Activated CD4-positive, alpha-beta memory T cell treated with anti-CD3 and anti-CD28 coated beads for 36 hours (primary cell): ENCODE measurements at regions of chr5 and their contacts with region 1.

Region 1: GRCh38 chr5:80125962-80126480 is 90.9 kb downstream of the THBS4 start:
- DNase-seq: peak; percentile 28
- H3K4me3 Mint-ChIP-seq: peak overlapping the region; percentile 51
- H3K27ac Mint-ChIP-seq: peak overlapping the region; percentile 70
- H3K4me1 Mint-ChIP-seq: peaks cover 52% of the 10 kb centered on the region
- H3K27me3 Mint-ChIP-seq: no peaks in the 10 kb centered on the region

Region 2: DNA sequence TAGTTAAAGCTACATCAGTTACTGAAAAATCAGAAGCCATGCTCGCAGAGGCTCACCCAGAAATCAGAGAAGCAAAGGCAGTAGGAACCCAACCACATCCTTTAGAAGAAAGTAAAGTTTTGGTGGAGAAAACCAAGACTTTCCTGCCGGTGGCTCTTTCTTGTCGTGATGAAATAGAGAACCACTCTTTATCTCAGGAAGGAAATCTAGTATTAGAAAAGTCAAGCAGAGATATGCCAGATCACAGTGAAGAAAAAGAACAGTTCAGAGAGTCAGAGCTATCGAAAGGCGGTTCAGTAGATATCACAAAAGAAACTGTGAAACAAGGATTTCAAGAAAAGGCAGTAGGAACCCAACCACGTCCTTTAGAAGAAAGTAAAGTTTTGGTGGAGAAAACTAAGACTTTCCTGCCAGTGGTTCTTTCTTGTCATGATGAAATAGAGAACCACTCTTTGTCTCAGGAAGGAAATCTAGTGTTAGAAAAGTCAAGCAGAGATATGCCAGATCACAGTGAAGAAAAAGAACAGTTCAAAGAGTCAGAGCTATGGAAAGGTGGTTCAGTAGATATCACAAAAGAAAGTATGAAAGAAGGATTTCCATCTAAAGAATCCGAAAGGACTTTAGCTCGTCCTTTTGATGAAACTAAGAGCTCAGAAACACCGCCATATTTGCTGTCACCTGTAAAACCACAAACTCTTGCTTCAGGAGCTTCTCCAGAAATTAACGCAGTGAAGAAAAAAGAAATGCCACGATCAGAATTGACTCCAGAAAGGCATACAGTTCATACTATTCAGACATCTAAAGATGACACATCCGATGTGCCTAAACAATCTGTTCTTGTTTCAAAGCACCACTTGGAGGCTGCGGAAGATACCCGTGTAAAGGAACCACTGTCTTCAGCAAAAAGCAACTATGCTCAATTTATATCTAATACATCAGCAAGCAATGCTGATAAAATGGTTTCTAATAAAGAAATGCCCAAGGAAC is 389.2 kb before region 1 on chr5:
- CTCF ChIA-PET with region 1: no interaction called
- POLR2A ChIA-PET with region 1: no interaction called
- intact Hi-C with region 1: loop called (anchors 1 kb)
- DNase-seq: peak; percentile 21
- H3K4me3 Mint-ChIP-seq: peak overlapping the region; percentile 57
- H3K27ac Mint-ChIP-seq: peak overlapping the region; percentile 62
- H3K4me1 Mint-ChIP-seq: peaks cover 55% of the 10 kb centered on the region
- H3K27me3 Mint-ChIP-seq: peaks cover 34% of the 10 kb centered on the region

Region 3: DNA sequence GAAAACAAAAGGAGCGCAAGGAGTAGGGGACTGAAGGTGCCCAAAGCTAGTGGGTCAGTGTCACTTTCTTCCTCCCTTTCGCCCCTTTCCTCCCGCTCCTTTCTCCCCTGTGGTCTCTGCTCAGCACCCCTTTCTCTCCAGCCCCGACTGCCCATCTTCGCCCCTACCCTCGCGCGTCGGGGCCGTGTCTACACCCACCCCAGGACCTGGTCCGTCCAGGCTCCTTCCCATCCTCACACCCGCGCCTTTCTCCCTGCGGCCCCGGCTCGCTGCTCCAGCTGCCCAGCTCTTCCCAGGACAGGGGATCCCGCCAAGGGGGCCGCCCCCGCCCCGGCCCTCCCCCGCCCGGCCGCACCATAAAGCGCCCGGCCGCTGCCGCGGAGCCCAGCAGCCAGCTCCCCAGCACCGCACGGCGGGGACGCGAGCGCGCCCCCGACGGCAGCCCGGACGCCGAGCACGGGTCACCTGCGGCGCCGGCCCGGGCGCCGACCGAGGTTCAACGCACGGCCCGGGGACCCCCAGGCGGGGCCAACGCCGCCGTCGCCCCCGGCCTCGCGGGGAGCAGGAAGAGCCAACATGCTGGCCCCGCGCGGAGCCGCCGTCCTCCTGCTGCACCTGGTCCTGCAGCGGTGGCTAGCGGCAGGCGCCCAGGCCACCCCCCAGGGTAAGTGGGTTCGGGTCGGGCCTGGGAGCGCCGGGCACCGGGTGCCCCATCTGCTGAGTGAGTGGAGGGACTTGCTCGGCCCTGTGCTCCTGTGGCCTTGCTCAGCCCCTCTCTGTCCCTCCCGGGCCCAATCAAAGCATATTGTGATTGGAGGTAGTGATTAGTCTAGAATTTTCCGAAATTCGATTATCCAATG is 90.8 kb before region 1 on chr5 and contains the start of gene THBS4:
- CTCF ChIA-PET with region 1: no interaction called
- POLR2A ChIA-PET with region 1: no interaction called
- intact Hi-C with region 1: no loop called
- DNase-seq: no peak
- H3K4me3 Mint-ChIP-seq: peak within 1 kb of the TSS; percentile 38
- H3K27ac Mint-ChIP-seq: no peak within 1 kb of the TSS
- H3K4me1 Mint-ChIP-seq: peaks cover 37% of the 10 kb centered on the region
- H3K27me3 Mint-ChIP-seq: peaks cover 45% of the 10 kb centered on the region
- total RNA-seq, gene THBS4: 1.8 to 2.2 TPM

Region 4: DNA sequence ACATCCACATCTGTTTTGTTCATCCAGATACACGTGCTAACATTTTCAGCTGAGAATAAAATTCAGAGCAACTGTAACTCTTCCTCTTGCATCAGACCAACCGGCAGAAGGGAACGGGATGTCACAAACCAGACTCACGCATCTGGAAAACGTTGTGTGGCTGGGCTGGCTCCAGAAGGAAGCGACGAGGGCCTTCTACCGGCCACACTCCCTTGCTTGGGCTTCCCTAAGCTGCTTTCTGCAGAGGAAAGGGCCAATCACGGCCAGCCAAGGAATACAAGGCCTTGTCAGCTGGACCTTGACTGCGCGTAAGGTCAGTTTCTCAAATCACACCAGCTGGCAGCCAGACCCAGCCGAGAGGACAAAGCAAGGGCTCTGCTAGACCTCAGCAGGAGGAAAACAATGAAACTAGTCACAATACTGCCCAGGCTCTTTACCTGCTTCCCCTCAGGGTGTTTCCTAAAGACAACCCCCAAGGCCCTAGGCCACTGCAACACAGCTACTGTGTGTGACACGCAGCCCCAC is 15.2 kb after region 1 on chr5:
- CTCF ChIA-PET with region 1: interaction called, 8 read pairs
- POLR2A ChIA-PET with region 1: interaction called, 29 read pairs
- intact Hi-C with region 1: loop called (anchors 1 kb)
- DNase-seq: no peak
- H3K4me3 Mint-ChIP-seq: peak overlapping the region; percentile 40
- H3K27ac Mint-ChIP-seq: peak overlapping the region; percentile 87
- H3K4me1 Mint-ChIP-seq: peaks cover 77% of the 10 kb centered on the region
- H3K27me3 Mint-ChIP-seq: no peaks in the 10 kb centered on the region

Region 5: DNA sequence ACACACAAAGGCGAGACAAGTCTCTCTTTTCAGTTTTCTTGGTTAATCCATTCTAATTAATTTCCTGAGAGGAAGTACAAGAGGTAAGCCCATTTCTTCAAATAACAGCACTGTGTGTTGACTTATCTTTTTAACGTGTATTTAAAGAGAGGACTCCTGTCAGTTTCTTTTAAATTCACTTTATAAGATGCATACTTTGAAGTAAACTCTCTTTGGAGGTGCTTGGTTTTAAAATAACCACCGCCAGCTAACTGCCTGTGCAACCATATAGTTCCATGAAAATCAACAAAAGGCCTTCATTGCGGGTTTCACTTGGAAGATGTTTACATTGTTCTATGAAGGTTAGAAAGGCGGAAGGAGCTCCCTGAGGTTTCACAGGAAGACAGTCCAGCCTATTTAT is 142.9 kb after region 1 on chr5:
- CTCF ChIA-PET with region 1: no interaction called
- POLR2A ChIA-PET with region 1: interaction called, 3 read pairs
- intact Hi-C with region 1: loop called (anchors 1 kb)
- DNase-seq: no peak
- H3K4me3 Mint-ChIP-seq: peak overlapping the region; percentile 20
- H3K27ac Mint-ChIP-seq: peak overlapping the region; percentile 82
- H3K4me1 Mint-ChIP-seq: peaks cover 29% of the 10 kb centered on the region
- H3K27me3 Mint-ChIP-seq: no peaks in the 10 kb centered on the region